ENCODE measurements at regions of chr10 and their contacts with region 1.

Region 1: DNA sequence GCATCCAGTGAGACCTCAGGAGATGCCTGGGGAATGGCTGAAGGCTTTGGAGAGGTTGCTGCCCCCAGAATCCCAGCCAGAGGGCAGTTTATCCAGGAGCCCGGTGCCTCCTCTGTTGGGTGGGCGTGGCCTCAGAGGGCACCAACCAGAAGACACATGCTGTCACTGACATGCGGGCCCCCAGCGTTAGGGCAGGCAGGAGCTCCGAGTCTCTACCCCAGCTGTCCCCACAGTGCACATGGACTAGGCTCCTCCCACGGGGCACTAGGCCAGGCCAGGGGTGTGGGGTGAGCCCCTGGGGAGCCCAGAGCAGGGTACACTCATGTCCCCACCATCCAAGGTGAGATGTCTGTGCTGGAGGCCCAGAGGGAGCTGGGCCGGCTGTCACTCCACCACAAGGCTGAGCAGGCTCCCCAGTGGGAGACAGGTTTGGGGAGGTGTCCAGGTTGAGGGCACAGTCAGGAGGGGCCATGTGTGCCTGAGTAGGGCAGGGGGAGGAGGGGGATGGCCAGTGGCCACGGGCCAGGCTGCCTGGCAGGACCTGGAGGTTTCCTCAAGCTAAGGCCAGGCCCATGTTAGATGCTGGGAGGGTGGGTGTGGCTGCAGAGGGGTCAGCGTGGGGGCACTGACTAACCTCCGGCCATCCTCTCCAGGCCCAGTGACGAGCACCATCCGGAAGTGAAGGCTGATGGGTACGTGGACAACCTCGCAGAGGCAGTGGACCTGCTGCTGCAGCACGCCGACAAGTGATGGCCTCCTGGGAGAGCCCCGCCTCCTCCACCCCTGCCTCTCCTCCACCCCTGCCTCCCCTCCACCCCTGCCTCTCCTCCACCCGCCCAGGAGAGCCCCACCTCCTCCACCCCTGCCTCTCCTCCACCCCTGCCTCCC is 131.3 kb downstream of the FAM53B start:
- DNase-seq: peak in 1 of 2 experiments; percentile 73
- H3K4me3 ChIP-seq: no peak overlapping the region
- H3K27ac ChIP-seq: no peak overlapping the region
- H3K4me1 ChIP-seq: peaks cover 0 to 8% (median 2%) of the 10 kb centered on the region in 4 experiments; a peak in 4 of 7 replicates
- H3K27me3 ChIP-seq: no peaks in the 10 kb centered on the region; a peak in 1 of 7 replicates
- CTCF ChIP-seq: peak; percentile 20 to 49 (median 34)
- EP300 ChIP-seq: no peak
- POLR2A ChIP-seq: no peak
- RAD21 ChIP-seq: peak; percentile 24 to 48; a peak in 2 of 4 replicates

Region 2: DNA sequence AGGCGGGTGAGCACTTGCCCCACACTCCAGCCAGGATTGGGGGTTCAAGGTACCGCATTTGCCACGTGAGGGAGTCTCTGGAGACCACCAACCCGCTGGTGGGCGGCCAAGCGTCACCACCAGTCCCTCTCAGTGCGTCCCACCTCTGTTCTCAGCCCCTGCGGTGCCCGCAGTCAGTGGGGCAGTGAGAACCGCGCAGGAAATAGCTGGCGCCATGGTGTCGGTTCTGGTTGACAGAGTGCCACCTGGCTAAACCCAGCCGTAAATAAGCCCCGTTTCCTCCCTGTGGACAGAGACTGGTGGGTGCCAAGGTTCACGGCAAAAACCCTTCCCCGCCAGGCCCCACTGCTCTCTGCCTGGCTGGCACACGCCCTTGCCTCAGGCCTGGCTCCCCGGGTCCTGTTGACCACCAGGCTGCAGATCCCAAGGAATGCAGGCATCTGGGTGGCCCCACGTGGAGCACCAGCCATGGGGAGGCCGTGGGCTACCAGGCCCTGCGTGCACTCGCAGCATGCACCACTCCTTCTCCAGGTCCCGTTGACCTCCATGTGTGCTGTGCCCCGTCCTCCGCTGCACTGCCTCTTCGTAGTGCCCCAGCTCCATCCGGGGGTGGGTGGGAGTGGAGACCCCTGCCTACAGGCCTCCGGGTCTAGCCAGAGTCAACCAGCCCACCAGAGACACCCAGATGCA is 11.3 kb before region 1 on chr10:
- CTCF ChIA-PET with region 1: interaction called, 12 read pairs
- POLR2A ChIA-PET with region 1: no interaction called
- DNase-seq: no peak
- H3K4me3 ChIP-seq: no peak overlapping the region
- H3K27ac ChIP-seq: no peak overlapping the region
- H3K4me1 ChIP-seq: no peaks in the 10 kb centered on the region
- H3K27me3 ChIP-seq: no peaks in the 10 kb centered on the region; a peak in 3 of 7 replicates
- CTCF ChIP-seq: no peak
- EP300 ChIP-seq: no peak
- POLR2A ChIP-seq: no peak
- RAD21 ChIP-seq: no peak

Region 3: GRCh38 chr10:124626759-124627380 is 14.0 kb after region 1 on chr10:
- CTCF ChIA-PET with region 1: interaction called, 14 read pairs
- POLR2A ChIA-PET with region 1: interaction called, 5 read pairs
- DNase-seq: no peak
- H3K4me3 ChIP-seq: no peak overlapping the region
- H3K27ac ChIP-seq: no peak overlapping the region
- H3K4me1 ChIP-seq: peaks cover 6 to 21% (median 12%) of the 10 kb centered on the region in 4 experiments
- H3K27me3 ChIP-seq: no peaks in the 10 kb centered on the region; a peak in 1 of 7 replicates
- CTCF ChIP-seq: no peak
- EP300 ChIP-seq: no peak
- POLR2A ChIP-seq: no peak
- RAD21 ChIP-seq: no peak

Region 4: GRCh38 chr10:124670849-124671248 is 58.0 kb after region 1 on chr10:
- CTCF ChIA-PET with region 1: no interaction called
- POLR2A ChIA-PET with region 1: no interaction called
- DNase-seq: no peak
- H3K4me3 ChIP-seq: no peak overlapping the region
- H3K27ac ChIP-seq: no peak overlapping the region
- H3K4me1 ChIP-seq: peaks cover 0 to 8% (median 2%) of the 10 kb centered on the region in 4 experiments; a peak in 4 of 7 replicates
- H3K27me3 ChIP-seq: no peaks in the 10 kb centered on the region
- CTCF ChIP-seq: no peak
- EP300 ChIP-seq: no peak
- POLR2A ChIP-seq: no peak
- RAD21 ChIP-seq: no peak